GM12878 (cell line): ENCODE measurements at regions of chr14 and their contacts with region 1.

Region 1: GRCh38 chr14:59964251-59965007 is 44.5 kb downstream of the LRRC9 start:
- DNase-seq: no peak
- ATAC-seq: peak; percentile 42
- H3K4me3 ChIP-seq: 0 out of 2 replicates have a peak overlapping the region, but pooled peaks have one; percentile 6
- H3K27ac ChIP-seq: peak overlapping the region; percentile 47
- H3K4me1 ChIP-seq: peaks cover 6% of the 10 kb centered on the region; the same call in 1 of the 2 replicates
- H3K27me3 ChIP-seq: no peaks in the 10 kb centered on the region
- CTCF ChIP-seq: no peak
- EP300 ChIP-seq: no peak
- POLR2A ChIP-seq: no peak
- RAD21 ChIP-seq: no peak

Region 2: GRCh38 chr14:59918824-59919569 is 45.4 kb before region 1 on chr14:
- CTCF ChIA-PET with region 1: interaction called, 11 read pairs
- POLR2A ChIA-PET with region 1: no interaction called
- RAD21 ChIA-PET with region 1: interaction called, 4 read pairs
- SMC1A ChIA-PET with region 1: interaction called, 6 read pairs
- in situ Hi-C with region 1: no loop called
- intact Hi-C with region 1: loop called (anchors 5 kb)
- DNase-seq: no peak
- ATAC-seq: peak; percentile 83
- H3K4me3 ChIP-seq: peak overlapping the region; percentile 45; the same call in 1 of the 2 replicates
- H3K27ac ChIP-seq: no peak overlapping the region
- H3K4me1 ChIP-seq: peaks cover 3% of the 10 kb centered on the region; the same call in 1 of the 2 replicates
- H3K27me3 ChIP-seq: peaks cover 0 to 5% of the 10 kb centered on the region in 2 experiments; a peak in 2 of 4 replicates
- CTCF ChIP-seq: peak; percentile 21 to 45 (median 38); a peak in 5 of 6 replicates
- EP300 ChIP-seq: no peak
- POLR2A ChIP-seq: no peak
- RAD21 ChIP-seq: peak; percentile 26; the same call in 1 of the 2 replicates

Region 3: DNA sequence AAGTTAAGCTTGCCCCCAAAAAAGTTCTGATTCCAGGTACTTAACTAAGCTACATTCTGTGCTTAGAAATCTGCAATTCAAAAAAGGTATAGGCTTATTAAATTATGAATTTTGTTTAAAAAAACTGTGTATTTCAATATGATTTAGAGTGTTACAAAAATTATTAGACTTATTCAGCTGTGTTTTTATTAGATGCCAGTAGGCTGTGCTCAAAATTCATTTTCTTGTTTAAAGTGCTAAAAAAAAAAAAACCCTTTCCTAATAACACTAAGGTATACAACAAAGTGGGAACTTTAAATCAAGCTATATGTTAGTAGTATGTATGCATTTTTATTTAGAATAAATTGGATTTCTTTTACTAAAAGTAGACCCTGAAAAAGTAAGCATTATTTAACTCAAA is 19.5 kb before region 1 on chr14:
- CTCF ChIA-PET with region 1: interaction called, 24 read pairs
- POLR2A ChIA-PET with region 1: interaction called, 4 read pairs
- RAD21 ChIA-PET with region 1: interaction called, 18 read pairs
- SMC1A ChIA-PET with region 1: interaction called, 36 read pairs
- in situ Hi-C with region 1: no loop called
- intact Hi-C with region 1: no loop called
- DNase-seq: no peak
- ATAC-seq: no peak
- H3K4me3 ChIP-seq: no peak overlapping the region
- H3K27ac ChIP-seq: no peak overlapping the region
- H3K4me1 ChIP-seq: peaks cover 4% of the 10 kb centered on the region; the same call in 1 of the 2 replicates
- H3K27me3 ChIP-seq: no peaks in the 10 kb centered on the region
- CTCF ChIP-seq: no peak; a peak in 1 of 6 replicates
- EP300 ChIP-seq: no peak
- POLR2A ChIP-seq: no peak
- RAD21 ChIP-seq: no peak

Region 4: GRCh38 chr14:60164712-60165546 is 200.5 kb after region 1 on chr14 and contains the start of gene DHRS7:
- CTCF ChIA-PET with region 1: interaction called, 59 read pairs
- POLR2A ChIA-PET with region 1: interaction called, 7 read pairs
- RAD21 ChIA-PET with region 1: interaction called, 30 read pairs
- SMC1A ChIA-PET with region 1: interaction called, 32 read pairs
- in situ Hi-C with region 1: no loop called
- intact Hi-C with region 1: loop called (anchors 5 kb)
- DNase-seq: peak; percentile 53
- ATAC-seq: peak; percentile 96
- H3K4me3 ChIP-seq: peak within 1 kb of the TSS; percentile 92
- H3K27ac ChIP-seq: peak within 1 kb of the TSS; percentile 88
- H3K4me1 ChIP-seq: peaks cover 20% of the 10 kb centered on the region
- H3K27me3 ChIP-seq: no peaks in the 10 kb centered on the region
- CTCF ChIP-seq: peak; percentile 46 to 76 (median 52); a peak in 5 of 6 replicates
- EP300 ChIP-seq: 0 out of 4 replicates have a peak, but pooled peaks of 1 of the 2 experiments have one; percentile 20
- POLR2A ChIP-seq: peak; percentile 93
- RAD21 ChIP-seq: peak; percentile 65
- polyA plus RNA-seq, gene DHRS7: 59.1 to 66.1 TPM

Region 5: DNA sequence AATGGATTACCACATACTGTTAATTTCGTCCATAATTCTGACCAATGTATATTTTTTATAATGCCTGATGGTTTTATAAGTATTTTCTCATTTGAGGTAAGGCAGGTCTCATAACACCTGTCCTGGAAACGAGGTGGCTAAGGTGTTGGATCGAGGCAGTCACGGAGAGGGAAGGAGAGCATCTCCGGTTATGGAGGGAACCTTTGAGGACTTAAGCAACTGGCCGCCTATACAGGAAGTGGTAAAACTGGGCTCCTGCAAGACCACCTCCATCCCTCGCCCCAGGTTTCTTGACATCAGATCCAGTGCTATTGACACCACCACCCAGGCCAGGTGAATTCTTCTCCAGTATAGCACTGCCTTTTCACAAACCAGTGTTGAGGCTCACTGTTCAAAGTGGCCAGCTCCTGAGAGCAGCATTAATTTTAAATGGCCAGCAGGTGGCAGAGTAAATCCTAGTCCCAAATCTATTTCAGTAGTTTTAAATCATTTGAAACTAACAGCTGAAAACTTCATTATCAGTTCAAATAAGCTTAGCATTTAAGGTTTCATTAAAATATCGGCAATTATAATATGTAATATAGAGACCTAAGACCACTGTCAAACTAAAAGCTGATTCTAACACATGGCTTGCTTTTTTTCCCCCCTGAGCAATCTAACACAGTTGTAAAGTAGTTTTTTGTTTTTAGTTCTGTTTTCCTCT is 385.4 kb after region 1 on chr14:
- CTCF ChIA-PET with region 1: interaction called, 23 read pairs
- POLR2A ChIA-PET with region 1: interaction called, 4 read pairs
- RAD21 ChIA-PET with region 1: no interaction called
- SMC1A ChIA-PET with region 1: no interaction called
- in situ Hi-C with region 1: no loop called
- intact Hi-C with region 1: no loop called
- DNase-seq: no peak
- ATAC-seq: peak; percentile 81
- H3K4me3 ChIP-seq: no peak overlapping the region
- H3K27ac ChIP-seq: no peak overlapping the region
- H3K4me1 ChIP-seq: no peaks in the 10 kb centered on the region
- H3K27me3 ChIP-seq: no peaks in the 10 kb centered on the region
- CTCF ChIP-seq: peak; percentile 41 to 70 (median 65); a peak in 5 of 6 replicates
- EP300 ChIP-seq: no peak
- POLR2A ChIP-seq: no peak
- RAD21 ChIP-seq: peak; percentile 66